Calu3 (cell line): ENCODE measurements at regions of chr13 and their contacts with region 1.

Region 1: GRCh38 chr13:40682449-40683240 is 16.2 kb upstream of the FOXO1 start:
- DNase-seq: no peak
- H3K4me3 Mint-ChIP-seq: no peak overlapping the region
- H3K27ac Mint-ChIP-seq: no peak overlapping the region
- H3K4me1 Mint-ChIP-seq: peaks cover 8% of the 10 kb centered on the region
- H3K27me3 Mint-ChIP-seq: no peaks in the 10 kb centered on the region
- CTCF ChIP-seq: peak; percentile 36

Region 2: DNA sequence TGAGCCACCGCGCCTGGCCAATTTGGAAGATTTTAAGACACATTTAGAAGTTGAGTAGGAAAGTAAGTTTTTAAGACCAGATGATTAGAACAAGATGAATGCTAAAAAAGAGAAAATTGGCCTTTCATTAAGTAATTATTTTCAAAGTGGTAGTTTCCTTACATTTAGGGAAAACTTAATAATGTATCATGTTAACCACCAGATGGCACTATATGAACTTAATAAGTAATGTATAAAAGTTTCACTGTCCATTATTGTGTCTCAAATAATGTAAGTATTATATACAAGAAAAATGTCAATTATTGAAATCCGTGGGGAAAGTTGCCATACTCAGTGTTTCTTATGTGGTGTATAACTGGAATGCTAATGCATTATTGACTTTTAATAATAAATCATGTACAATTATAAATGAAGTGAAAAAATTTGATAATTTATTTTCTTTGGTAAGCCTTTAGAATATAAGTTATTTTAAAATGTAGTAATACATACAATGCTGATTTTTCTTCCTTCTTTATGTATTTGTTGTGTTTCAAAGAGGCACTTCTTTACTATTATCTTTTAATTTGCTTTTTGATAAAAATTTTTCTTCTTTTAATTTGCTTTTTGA is 998.0 kb before region 1 on chr13:
- CTCF ChIA-PET with region 1: no interaction called
- intact Hi-C with region 1: loop called (anchors 2 kb)
- DNase-seq: no peak
- H3K4me3 Mint-ChIP-seq: no peak overlapping the region
- H3K27ac Mint-ChIP-seq: no peak overlapping the region
- H3K4me1 Mint-ChIP-seq: no peaks in the 10 kb centered on the region
- H3K27me3 Mint-ChIP-seq: no peaks in the 10 kb centered on the region
- CTCF ChIP-seq: no peak

Region 3: DNA sequence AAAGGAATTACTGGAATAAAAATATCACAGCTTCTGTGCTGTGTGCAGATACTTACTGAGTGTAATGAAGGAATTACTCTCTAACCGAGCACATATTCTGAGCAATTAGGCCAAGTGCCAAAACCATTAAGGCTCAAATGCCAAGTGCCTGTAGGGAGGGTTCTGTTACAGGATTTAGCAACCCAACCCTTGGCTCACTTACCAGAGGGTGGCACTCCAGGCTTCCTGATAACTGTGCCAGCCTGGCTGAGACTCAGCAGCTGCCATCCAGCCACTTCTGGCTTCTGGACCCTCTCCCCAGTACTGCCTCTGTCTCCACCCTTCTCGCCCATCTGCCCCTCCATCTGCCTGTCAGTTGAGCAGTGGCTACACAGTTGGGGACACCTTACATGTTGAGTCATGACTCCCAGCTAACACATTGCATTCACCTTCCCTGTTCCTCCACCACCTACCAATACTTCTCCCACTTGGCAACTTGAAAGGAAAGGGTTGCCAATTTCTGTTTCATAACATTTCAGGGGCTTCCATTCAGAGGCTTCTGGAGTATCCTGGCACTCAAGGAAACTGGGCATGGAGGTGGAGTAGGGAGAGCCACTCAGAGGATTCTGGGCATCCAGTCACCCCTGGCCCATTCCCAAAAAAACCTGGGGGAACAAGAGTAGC is 916.7 kb before region 1 on chr13:
- CTCF ChIA-PET with region 1: no interaction called
- intact Hi-C with region 1: loop called (anchors 5 kb)
- DNase-seq: peak; percentile 47
- H3K4me3 Mint-ChIP-seq: no peak overlapping the region
- H3K27ac Mint-ChIP-seq: no peak overlapping the region
- H3K4me1 Mint-ChIP-seq: no peaks in the 10 kb centered on the region
- H3K27me3 Mint-ChIP-seq: no peaks in the 10 kb centered on the region
- CTCF ChIP-seq: no peak

Region 4: DNA sequence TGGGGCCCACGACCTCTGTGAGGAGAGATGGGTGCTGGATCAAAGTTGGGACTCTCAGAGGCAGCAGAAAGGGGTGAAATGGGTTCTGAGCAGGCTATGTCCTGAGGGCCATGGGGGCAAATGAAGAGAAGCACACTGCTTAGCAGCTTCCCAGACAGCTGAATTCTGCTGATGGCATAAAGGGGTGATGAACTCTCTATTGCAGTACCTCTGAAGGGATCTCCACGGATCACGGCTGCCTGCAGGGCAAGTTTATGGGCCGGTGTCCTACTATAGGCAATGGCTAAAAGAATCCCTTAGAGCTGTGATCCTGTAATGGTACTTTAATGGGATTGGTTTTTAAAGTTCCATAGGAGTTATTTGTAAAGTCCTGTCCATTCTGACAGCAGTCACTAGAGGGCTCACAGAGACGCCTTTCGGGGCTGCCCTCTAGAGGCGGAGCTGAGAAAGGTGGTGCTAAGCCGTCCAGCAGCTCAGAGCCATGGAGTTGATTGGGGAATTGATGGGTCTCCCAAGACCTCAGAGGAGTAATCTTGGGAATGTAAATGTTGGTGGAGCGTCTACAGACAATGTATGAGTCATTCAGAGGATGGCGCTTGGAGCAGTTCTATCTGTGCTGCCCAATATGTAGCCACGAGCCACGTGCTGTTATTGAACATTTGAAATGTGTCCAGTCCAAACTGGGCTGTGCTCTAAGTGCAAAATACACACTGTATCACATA is 739.9 kb before region 1 on chr13:
- CTCF ChIA-PET with region 1: interaction called, 7 read pairs
- intact Hi-C with region 1: loop called (anchors 2 kb)
- DNase-seq: peak; percentile 70
- H3K4me3 Mint-ChIP-seq: no peak overlapping the region
- H3K27ac Mint-ChIP-seq: no peak overlapping the region
- H3K4me1 Mint-ChIP-seq: peaks cover 7% of the 10 kb centered on the region
- H3K27me3 Mint-ChIP-seq: no peaks in the 10 kb centered on the region
- CTCF ChIP-seq: peak; percentile 86

Region 5: DNA sequence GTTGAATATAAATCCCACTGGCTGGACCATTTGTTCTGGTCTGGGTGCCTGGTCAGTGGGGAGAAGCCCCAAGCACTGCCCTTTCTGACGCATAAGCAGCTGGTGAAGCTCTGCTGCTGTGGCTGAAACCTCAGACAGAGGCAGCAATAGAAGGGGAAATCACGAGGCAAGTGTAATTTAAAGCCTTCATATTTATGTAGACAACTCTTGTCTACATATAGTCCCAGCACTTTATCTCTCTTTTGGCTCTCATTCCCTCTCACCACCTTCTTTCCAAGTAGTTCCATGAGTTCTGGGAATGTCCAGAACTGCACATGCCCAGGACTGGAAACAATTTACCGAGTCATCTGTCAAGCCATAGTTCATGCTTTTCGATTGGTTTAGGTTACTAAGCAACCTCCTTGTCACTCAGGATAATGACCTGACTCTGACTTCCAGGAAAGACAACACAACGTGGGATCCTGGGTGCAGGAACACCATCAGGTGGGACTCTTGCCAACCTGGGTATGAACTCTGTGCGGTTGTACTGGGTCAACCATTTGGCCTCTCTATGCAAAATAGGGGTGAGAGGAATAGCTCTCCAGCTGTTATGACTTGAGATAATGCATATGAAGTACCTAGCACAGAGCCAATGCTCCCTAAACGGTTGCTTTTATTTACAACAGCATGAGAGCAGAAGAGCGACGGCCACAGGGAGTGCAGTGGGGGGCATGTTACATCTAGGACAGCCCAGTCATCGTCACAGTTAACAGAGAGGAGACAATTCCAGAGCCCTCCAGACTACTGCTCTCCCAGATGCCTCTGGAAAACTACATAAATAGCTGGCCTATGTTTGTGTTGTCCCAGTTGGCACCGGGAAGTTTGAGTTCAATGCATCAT is 338.1 kb before region 1 on chr13:
- CTCF ChIA-PET with region 1: no interaction called
- intact Hi-C with region 1: no loop called
- DNase-seq: no peak
- H3K4me3 Mint-ChIP-seq: no peak overlapping the region
- H3K27ac Mint-ChIP-seq: no peak overlapping the region
- H3K4me1 Mint-ChIP-seq: peaks cover 8% of the 10 kb centered on the region
- H3K27me3 Mint-ChIP-seq: no peaks in the 10 kb centered on the region
- CTCF ChIP-seq: no peak

Region 6: GRCh38 chr13:40596484-40596883 is 86.2 kb before region 1 on chr13:
- CTCF ChIA-PET with region 1: no interaction called
- intact Hi-C with region 1: no loop called
- DNase-seq: no peak
- H3K4me3 Mint-ChIP-seq: no peak overlapping the region
- H3K27ac Mint-ChIP-seq: no peak overlapping the region
- H3K4me1 Mint-ChIP-seq: peaks cover 39% of the 10 kb centered on the region
- H3K27me3 Mint-ChIP-seq: no peaks in the 10 kb centered on the region
- CTCF ChIP-seq: no peak

Region 7: GRCh38 chr13:41065078-41065477 is 382.4 kb after region 1 on chr13:
- CTCF ChIA-PET with region 1: no interaction called
- intact Hi-C with region 1: no loop called
- DNase-seq: no peak
- H3K4me3 Mint-ChIP-seq: no peak overlapping the region
- H3K27ac Mint-ChIP-seq: no peak overlapping the region
- H3K4me1 Mint-ChIP-seq: no peaks in the 10 kb centered on the region
- H3K27me3 Mint-ChIP-seq: no peaks in the 10 kb centered on the region
- CTCF ChIP-seq: no peak